Tibial artery (tissue), 4 donors: ENCODE measurements at regions of chr6 and their contacts with region 1.

Region 1: DNA sequence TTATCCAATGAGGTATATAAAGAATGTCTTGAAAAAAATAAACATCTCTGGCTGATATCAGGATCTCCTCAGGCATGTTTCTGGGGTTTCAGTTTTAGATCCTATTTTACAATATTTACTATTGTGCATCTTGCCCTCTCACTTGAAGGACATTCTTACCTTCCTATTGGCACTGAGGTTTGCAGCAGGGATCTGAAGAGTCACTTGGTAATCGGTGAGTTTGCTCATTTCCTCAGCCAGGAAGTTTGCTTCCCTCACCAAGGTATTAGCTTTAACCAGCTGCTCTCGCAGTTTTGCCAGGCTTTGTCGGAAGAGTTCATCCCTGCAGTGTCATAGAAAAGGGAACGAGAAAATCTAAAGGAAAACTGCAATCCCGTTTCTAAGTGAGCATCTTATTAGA is 101.9 kb upstream of the NUP153 start:
- DNase-seq: no peak
- H3K4me3 ChIP-seq: no peak overlapping the region
- H3K27ac ChIP-seq: no peak overlapping the region
- H3K4me1 ChIP-seq: no peaks in the 10 kb centered on the region
- H3K27me3 ChIP-seq: no peaks in the 10 kb centered on the region
- CTCF ChIP-seq: no peak

Region 2: GRCh38 chr6:17156112-17156921 is 652.3 kb before region 1 on chr6:
- intact Hi-C with region 1: loop called (anchors 5 kb)
- DNase-seq: peak; percentile 73 to 81
- H3K4me3 ChIP-seq: no peak overlapping the region
- H3K27ac ChIP-seq: no peak overlapping the region
- H3K4me1 ChIP-seq: no peaks in the 10 kb centered on the region
- H3K27me3 ChIP-seq: no peaks in the 10 kb centered on the region
- CTCF ChIP-seq: peak; percentile 69 to 90

Region 3: DNA sequence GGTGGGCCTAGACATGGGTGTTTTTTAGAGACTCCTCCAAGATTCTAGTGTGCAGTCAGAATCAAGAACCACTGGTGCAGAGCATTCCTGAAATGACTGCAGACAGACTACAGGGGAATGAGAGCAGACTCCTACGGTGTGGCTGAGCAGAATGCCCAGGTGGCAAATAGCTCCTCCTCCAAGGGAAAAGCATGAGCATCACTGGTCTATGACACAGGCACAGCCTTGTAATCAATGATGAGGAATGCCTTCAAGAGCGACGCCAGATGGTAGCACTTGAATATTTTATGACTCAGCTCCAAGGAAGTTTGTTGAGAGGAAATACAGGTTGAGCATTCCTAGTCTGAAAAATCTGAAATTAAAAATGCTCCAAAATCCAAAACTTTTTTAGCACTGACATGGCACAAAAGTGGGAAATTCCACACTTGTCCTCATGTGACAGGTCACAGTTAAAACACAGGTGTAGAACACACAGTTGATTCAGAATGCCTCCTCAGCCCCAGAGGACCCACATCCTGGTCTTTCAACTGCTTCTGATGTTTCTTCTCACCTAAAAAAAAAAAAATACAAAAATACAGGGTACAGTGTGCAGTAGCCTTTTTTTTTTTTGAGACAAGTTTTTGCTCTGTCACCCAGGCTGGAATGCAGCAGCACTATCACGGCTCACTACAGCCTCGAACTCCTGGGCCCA is 219.1 kb before region 1 on chr6:
- intact Hi-C with region 1: loop called (anchors 5 kb)
- DNase-seq: no peak
- H3K4me3 ChIP-seq: no peak overlapping the region
- H3K27ac ChIP-seq: no peak overlapping the region
- H3K4me1 ChIP-seq: no peaks in the 10 kb centered on the region
- H3K27me3 ChIP-seq: no peaks in the 10 kb centered on the region
- CTCF ChIP-seq: no peak

Region 4: DNA sequence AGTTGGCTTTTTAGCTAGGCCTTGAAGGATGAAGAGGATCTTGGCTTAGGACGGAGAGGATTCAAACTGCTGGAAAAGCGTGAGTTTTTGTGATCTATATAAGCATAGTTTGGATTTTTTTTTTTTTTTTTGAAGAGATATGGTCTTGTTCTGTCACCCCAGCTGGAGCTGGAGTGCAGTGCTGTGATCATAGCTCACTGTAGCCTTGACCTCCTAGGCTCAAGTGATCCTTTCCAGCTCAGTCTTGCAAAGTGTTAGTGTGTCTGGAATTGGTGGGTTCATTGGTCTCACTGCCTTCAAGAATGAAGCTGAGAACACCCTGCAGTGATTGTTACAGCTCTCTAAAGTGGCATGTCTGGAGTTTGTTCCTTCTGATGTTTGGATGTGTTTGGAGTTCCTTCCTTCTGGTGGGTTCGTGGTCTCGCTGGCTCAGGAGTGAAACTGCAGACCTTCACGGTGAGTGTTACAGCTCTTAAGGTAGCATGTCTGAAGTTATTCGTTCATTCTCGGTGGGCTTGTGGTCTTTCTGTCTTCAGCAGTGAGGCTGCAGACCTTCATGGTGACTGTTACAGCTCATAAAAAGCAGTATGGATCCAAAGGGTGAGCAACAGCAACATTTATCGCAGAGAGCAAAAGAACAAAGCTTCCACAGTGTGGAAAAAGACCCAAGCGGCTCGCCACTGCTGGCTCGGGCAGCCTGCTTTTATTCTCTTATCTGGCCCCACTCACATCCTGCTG is 64.4 kb before region 1 on chr6:
- intact Hi-C with region 1: no loop called
- DNase-seq: no peak
- H3K4me3 ChIP-seq: no peak overlapping the region
- H3K27ac ChIP-seq: no peak overlapping the region
- H3K4me1 ChIP-seq: no peaks in the 10 kb centered on the region
- H3K27me3 ChIP-seq: no peaks in the 10 kb centered on the region
- CTCF ChIP-seq: no peak